ENCODE measurements at regions of chr4 and their contacts with region 1.

Region 1: GRCh38 chr4:15956179-15956850 is 6.7 kb downstream of the FGFBP2 start:
- DNase-seq: peak; percentile 68
- H3K4me3 ChIP-seq: no peak overlapping the region
- H3K27ac ChIP-seq: no peak overlapping the region
- H3K4me1 ChIP-seq: peaks cover 5% of the 10 kb centered on the region
- H3K27me3 ChIP-seq: no peaks in the 10 kb centered on the region
- CTCF ChIP-seq: peak; percentile 99 to 100

Region 2: DNA sequence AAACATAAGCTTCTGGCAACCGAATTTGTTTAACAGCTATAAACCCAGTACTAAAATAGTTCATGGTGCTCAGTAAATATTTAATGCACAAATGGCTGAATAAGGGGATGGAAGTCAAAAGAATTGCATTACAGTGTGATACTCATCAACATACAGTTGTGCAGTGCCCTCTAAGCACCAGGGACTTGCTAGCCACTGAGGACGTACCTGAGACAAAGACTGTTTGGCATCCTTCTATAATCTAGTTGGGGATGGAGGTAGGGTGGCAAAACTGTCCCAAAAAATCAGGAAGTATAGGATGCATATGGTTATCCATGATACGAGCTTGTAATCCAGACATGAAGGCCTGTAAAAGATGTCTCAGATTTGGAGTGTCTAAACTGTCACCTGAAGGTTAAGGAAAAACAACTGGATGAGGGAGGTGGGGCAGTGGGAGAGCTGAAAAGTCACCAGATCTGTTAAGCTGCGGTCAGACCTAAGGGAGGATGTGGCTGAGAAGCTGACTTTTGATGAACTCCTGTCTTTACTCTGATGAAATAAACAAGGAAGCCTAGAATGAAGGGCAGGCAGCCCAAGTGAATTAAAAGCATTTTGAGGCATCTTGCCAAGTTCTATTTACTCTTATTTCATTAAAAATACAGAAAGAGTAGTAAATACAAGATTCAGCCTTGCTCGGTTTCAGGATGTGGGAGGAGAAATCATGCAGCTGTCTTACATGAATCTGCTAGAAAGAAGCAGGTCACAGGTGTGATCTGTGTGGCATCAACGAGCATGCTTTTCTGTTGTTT is 190.2 kb before region 1 on chr4:
- CTCF ChIA-PET with region 1: no interaction called
- dilution Hi-C with region 1: no loop called
- in situ Hi-C with region 1: no loop called
- intact Hi-C with region 1: no loop called
- DNase-seq: no peak
- H3K4me3 ChIP-seq: no peak overlapping the region
- H3K27ac ChIP-seq: no peak overlapping the region
- H3K4me1 ChIP-seq: no peaks in the 10 kb centered on the region
- H3K27me3 ChIP-seq: no peaks in the 10 kb centered on the region
- CTCF ChIP-seq: no peak

Region 3: GRCh38 chr4:15888515-15888914 is 67.8 kb before region 1 on chr4:
- CTCF ChIA-PET with region 1: interaction called, 43 read pairs
- dilution Hi-C with region 1: loop called (anchors 5 kb)
- in situ Hi-C with region 1: loop called (anchors 5 kb)
- intact Hi-C with region 1: no loop called
- DNase-seq: no peak
- H3K4me3 ChIP-seq: no peak overlapping the region
- H3K27ac ChIP-seq: no peak overlapping the region
- H3K4me1 ChIP-seq: peaks cover 13% of the 10 kb centered on the region
- H3K27me3 ChIP-seq: no peaks in the 10 kb centered on the region
- CTCF ChIP-seq: no peak

Measured in mammary epithelial cell (primary cell).